Activated CD4-positive, alpha-beta memory T cell treated with anti-CD3 and anti-CD28 coated beads, Interleukin-2, amount 10 ng/mL, durations not matched to agents 7 days and 5 days (primary cell): ENCODE measurements at regions of chr5 and their contacts with region 1.

Region 1: DNA sequence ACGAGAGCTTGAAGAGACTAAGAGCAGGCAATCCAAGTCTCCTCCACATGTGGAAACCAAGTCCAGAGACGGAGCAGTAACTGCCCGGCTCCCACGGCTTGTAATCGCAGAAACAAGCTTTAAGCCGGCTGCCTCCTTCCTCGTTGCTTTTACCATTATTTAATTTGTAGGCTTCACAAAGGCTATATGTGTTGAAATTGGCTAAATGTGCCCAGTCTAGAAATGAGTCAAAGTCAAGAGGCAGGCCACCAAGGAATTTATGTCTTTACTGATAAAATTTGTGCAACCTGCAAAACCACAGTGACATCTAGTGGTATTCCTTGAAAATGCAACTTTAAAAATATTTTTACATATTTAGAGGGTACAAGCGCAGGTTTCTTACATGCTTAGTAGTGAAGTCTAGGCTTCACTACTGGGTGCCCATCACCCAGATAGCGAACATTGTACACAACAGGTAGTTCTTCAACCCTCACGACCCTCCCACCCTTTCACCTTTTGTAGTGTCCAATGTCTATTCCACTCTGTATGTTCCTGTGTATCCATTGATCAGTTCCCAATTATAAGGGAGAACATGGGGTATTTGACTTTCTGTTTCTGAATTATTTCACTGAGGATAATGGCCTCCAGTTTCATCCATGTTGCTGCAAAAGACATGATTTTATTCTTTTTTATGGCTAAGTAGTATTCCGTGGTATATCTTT is 33.5 kb upstream of the EBF1 start:
- DNase-seq: no peak
- H3K4me3 Mint-ChIP-seq: no peak overlapping the region
- H3K27ac Mint-ChIP-seq: no peak overlapping the region
- H3K4me1 Mint-ChIP-seq: no peaks in the 10 kb centered on the region
- H3K27me3 Mint-ChIP-seq: peaks cover 23% of the 10 kb centered on the region

Region 2: GRCh38 chr5:158174918-158175851 is 958.0 kb before region 1 on chr5:
- CTCF ChIA-PET with region 1: interaction called, 10 read pairs
- POLR2A ChIA-PET with region 1: no interaction called
- DNase-seq: peak; percentile 47
- H3K4me3 Mint-ChIP-seq: no peak overlapping the region
- H3K27ac Mint-ChIP-seq: no peak overlapping the region
- H3K4me1 Mint-ChIP-seq: no peaks in the 10 kb centered on the region
- H3K27me3 Mint-ChIP-seq: no peaks in the 10 kb centered on the region

Region 3: GRCh38 chr5:158695595-158696330 is 437.4 kb before region 1 on chr5:
- CTCF ChIA-PET with region 1: interaction called, 54 read pairs
- POLR2A ChIA-PET with region 1: no interaction called
- DNase-seq: peak; percentile 66
- H3K4me3 Mint-ChIP-seq: no peak overlapping the region
- H3K27ac Mint-ChIP-seq: no peak overlapping the region
- H3K4me1 Mint-ChIP-seq: no peaks in the 10 kb centered on the region
- H3K27me3 Mint-ChIP-seq: peaks cover 14% of the 10 kb centered on the region